K562 (cell line): ENCODE measurements at regions of chr1 and their contacts with region 1.

Region 1: GRCh38 chr1:2412519-2413233 is at the start of gene PEX10:
- DNase-seq: peak; percentile 96 to 99 (median 98)
- ATAC-seq: peak; percentile 93
- H3K4me3 ChIP-seq: peak within 1 kb of the TSS; percentile 100
- H3K27ac ChIP-seq: peak within 1 kb of the TSS; percentile 90
- H3K4me1 ChIP-seq: peaks cover 15 to 82% of the 10 kb centered on the region in 2 experiments
- H3K27me3 ChIP-seq: no peaks in the 10 kb centered on the region; a peak in 2 of 5 replicates
- CTCF ChIP-seq: 0 out of 6 replicates have a peak, but pooled peaks of 1 of the 3 experiments have one; percentile 4
- EP300 ChIP-seq: no peak
- POLR2A ChIP-seq: peak; percentile 74
- RAD21 ChIP-seq: peak in 1 of 2 experiments; percentile 4; a peak in 1 of 4 replicates
- polyA plus RNA-seq, gene PEX10: 0.03 to 0.11 TPM

Region 2: GRCh38 chr1:2391041-2391930 is 21.4 kb before region 1 on chr1 and contains the starts of genes MORN1 and RER1:
- CTCF ChIA-PET with region 1: no interaction called
- POLR2A ChIA-PET with region 1: interaction called, 24 read pairs
- in situ Hi-C with region 1: no loop called
- intact Hi-C with region 1: loop called (anchors 2 kb)
- DNase-seq: peak; percentile 96 to 100 (median 98)
- ATAC-seq: peak; percentile 98
- H3K4me3 ChIP-seq: peak within 1 kb of the TSS; percentile 100
- H3K27ac ChIP-seq: peak within 1 kb of the TSS; percentile 79
- H3K4me1 ChIP-seq: peaks cover 22 to 41% of the 10 kb centered on the region in 2 experiments
- H3K27me3 ChIP-seq: no peaks in the 10 kb centered on the region
- CTCF ChIP-seq: no peak
- EP300 ChIP-seq: peak; percentile 46
- POLR2A ChIP-seq: peak; percentile 81
- RAD21 ChIP-seq: no peak
- polyA plus RNA-seq, gene MORN1: 0.24 to 0.35 TPM
- polyA plus RNA-seq, gene RER1: 19.6 to 34.5 TPM

Region 3: DNA sequence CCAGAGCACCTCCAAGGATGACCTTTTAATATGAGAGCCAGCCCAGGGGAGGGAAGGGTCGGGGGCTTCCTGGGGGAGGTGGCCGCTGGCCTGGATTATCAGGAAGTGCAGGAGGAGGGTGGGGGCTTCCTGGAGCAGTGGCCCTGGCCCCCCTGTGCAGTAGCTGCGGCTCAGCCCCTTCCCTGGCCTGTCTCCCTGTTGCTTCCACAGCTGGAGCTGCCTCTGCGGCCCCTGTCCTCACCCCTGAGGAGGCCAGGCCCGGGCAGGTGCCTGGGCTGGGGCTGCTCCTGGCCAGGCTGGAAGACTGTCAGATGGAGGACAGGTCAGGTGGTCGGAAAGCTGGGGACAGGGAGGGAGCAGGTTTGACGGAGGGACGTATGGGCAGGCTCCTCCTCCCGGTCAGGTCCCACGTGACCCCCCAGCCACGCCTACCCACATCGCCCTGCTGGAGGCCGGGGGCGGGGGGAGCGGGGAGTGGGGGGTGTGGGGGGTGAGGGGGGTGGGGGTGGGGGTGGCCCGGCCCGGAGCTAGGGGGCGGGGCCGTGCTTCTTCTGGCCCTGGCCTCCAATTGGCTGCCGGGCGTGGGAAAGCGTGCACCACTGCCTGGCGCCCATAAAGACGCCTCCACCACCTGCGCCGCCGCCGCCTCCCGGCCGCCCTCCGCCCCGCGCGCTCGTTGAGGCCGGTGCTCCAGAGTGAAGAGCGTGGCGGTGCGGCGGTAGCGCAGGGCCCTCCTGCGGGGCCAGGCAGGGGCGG is 133.3 kb after region 1 on chr1:
- CTCF ChIA-PET with region 1: interaction called, 36 read pairs
- POLR2A ChIA-PET with region 1: interaction called, 3 read pairs
- in situ Hi-C with region 1: no loop called
- intact Hi-C with region 1: loop called (anchors 1 kb)
- DNase-seq: peak; percentile 96 to 99 (median 98)
- ATAC-seq: peak; percentile 73
- H3K4me3 ChIP-seq: peak overlapping the region; percentile 62
- H3K27ac ChIP-seq: peak overlapping the region; percentile 79
- H3K4me1 ChIP-seq: peaks cover 72 to 90% of the 10 kb centered on the region in 2 experiments
- H3K27me3 ChIP-seq: no peaks in the 10 kb centered on the region
- CTCF ChIP-seq: no peak
- EP300 ChIP-seq: no peak
- POLR2A ChIP-seq: peak; percentile 79
- RAD21 ChIP-seq: no peak

Region 4: GRCh38 chr1:2642560-2643413 is 230.1 kb after region 1 on chr1:
- CTCF ChIA-PET with region 1: no interaction called
- POLR2A ChIA-PET with region 1: no interaction called
- in situ Hi-C with region 1: loop called (anchors 10 kb)
- intact Hi-C with region 1: loop called (anchors 10 kb)
- DNase-seq: peak; percentile 94 to 100 (median 100)
- ATAC-seq: peak; percentile 93
- H3K4me3 ChIP-seq: peak overlapping the region; percentile 66
- H3K27ac ChIP-seq: peak overlapping the region; percentile 76
- H3K4me1 ChIP-seq: peaks cover 0 to 37% of the 10 kb centered on the region in 2 experiments; a peak in 2 of 5 replicates
- H3K27me3 ChIP-seq: peaks cover 0 to 12% of the 10 kb centered on the region in 2 experiments; a peak in 2 of 5 replicates
- CTCF ChIP-seq: peak; percentile 8 to 23 (median 13); a peak in 3 of 6 replicates
- EP300 ChIP-seq: no peak
- POLR2A ChIP-seq: peak; percentile 78
- RAD21 ChIP-seq: no peak

Region 5: GRCh38 chr1:2801535-2802291 is 389.0 kb after region 1 on chr1 and contains the start of gene TTC34:
- CTCF ChIA-PET with region 1: interaction called, 3 read pairs
- POLR2A ChIA-PET with region 1: no interaction called
- in situ Hi-C with region 1: no loop called
- intact Hi-C with region 1: loop called (anchors 1 kb)
- DNase-seq: peak; percentile 76 to 90 (median 89)
- ATAC-seq: peak; percentile 99
- H3K4me3 ChIP-seq: no peak within 1 kb of the TSS
- H3K27ac ChIP-seq: no peak within 1 kb of the TSS
- H3K4me1 ChIP-seq: peaks cover 0 to 34% of the 10 kb centered on the region in 2 experiments; a peak in 1 of 5 replicates
- H3K27me3 ChIP-seq: peaks cover 0 to 27% of the 10 kb centered on the region in 2 experiments; a peak in 3 of 5 replicates
- CTCF ChIP-seq: peak; percentile 78 to 90 (median 89)
- EP300 ChIP-seq: no peak
- POLR2A ChIP-seq: no peak
- RAD21 ChIP-seq: peak; percentile 56 to 80; a peak in 3 of 4 replicates
- polyA plus RNA-seq, gene TTC34: not detected